Dendritic cell treated with granulocyte-macrophage colony-stimulating factor and Interleukin-4, amounts not matched to agents 40 ng/mL and 50 ng/mL, for 4 days (primary cell): ENCODE measurements at regions of chr22 and their contacts with region 1.

Region 1: GRCh38 chr22:37933711-37934376 is 19.6 kb downstream of the C22orf23 start:
- H3K4me3 Mint-ChIP-seq: no peak overlapping the region
- H3K27ac Mint-ChIP-seq: no peak overlapping the region
- H3K4me1 Mint-ChIP-seq: peaks cover 16% of the 10 kb centered on the region
- H3K27me3 Mint-ChIP-seq: no peaks in the 10 kb centered on the region

Region 2: DNA sequence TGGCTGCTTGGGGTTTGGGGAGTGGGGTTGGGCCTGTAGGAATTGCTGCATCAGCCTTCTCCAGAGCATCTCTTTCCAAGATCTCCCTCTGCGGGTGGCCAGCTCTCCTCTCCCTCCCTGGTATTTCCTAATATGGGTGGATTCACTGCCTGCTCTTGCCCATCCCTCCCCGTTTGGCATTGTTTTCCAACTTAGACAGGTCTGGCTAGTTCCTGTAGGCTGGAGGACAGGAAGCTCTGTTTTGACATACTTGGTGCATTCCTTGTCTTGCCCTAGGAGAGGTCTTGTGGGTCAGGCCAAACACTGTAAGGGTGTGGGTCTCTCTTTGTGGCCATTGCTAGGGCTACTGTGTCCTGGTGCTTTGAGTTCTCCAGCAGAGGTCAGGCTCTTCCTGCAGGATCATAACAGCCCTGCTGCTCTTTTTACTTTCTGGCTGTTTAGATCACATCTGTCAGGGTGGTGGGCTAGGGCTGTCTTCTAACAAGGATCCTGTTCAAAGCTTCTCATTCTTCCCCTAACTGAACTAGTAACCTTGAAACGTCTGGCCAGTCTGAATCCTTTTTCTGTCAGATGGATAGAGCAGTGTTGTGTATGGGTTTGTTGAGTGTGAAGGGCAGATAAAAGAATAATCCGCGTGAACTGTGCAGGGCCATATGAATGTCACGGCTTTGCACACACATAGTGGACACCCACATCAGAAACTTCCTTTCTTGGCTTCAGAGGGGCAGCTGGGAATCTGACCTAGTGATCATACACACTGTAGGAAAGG is 46.0 kb before region 1 on chr22:
- intact Hi-C with region 1: no loop called
- H3K4me3 Mint-ChIP-seq: no peak overlapping the region
- H3K27ac Mint-ChIP-seq: no peak overlapping the region
- H3K4me1 Mint-ChIP-seq: peaks cover 5% of the 10 kb centered on the region
- H3K27me3 Mint-ChIP-seq: no peaks in the 10 kb centered on the region

Region 3: GRCh38 chr22:37905534-37906363 is 28.1 kb before region 1 on chr22 and contains the start of gene MICALL1:
- intact Hi-C with region 1: loop called (anchors 1 kb)
- H3K4me3 Mint-ChIP-seq: peak within 1 kb of the TSS; percentile 81
- H3K27ac Mint-ChIP-seq: peak within 1 kb of the TSS; percentile 84
- H3K4me1 Mint-ChIP-seq: peaks cover 24% of the 10 kb centered on the region
- H3K27me3 Mint-ChIP-seq: peaks cover 2% of the 10 kb centered on the region